ENCODE measurements at regions of chr21 and their contacts with region 1.

Region 1: GRCh38 chr21:28944296-28944695 is 48.4 kb downstream of the LTN1 start:
- DNase-seq: no peak
- ATAC-seq: no peak
- H3K4me3 Mint-ChIP-seq: no peak overlapping the region
- H3K27ac Mint-ChIP-seq: no peak overlapping the region
- H3K4me1 Mint-ChIP-seq: peaks cover 1% of the 10 kb centered on the region
- H3K27me3 Mint-ChIP-seq: no peaks in the 10 kb centered on the region

Region 2: GRCh38 chr21:28516991-28517592 is 427.2 kb before region 1 on chr21:
- CTCF ChIA-PET with region 1: no interaction called
- POLR2A ChIA-PET with region 1: no interaction called
- intact Hi-C with region 1: loop called (anchors 2 to 10 kb)
- DNase-seq: peak; percentile 80
- ATAC-seq: peak; percentile 97
- H3K4me3 Mint-ChIP-seq: no peak overlapping the region
- H3K27ac Mint-ChIP-seq: no peak overlapping the region
- H3K4me1 Mint-ChIP-seq: no peaks in the 10 kb centered on the region
- H3K27me3 Mint-ChIP-seq: no peaks in the 10 kb centered on the region

Measured in activated CD4-positive, alpha-beta T cell treated with anti-CD3 and anti-CD28 coated beads for 36 hours (primary cell).